Activated CD8-positive, alpha-beta memory T cell treated with anti-CD3 and anti-CD28 coated beads, Interleukin-2, amount 10 ng/mL, durations not matched to agents 7 days and 5 days (primary cell): ENCODE measurements at regions of chr22 and their contacts with region 1.

Region 1: DNA sequence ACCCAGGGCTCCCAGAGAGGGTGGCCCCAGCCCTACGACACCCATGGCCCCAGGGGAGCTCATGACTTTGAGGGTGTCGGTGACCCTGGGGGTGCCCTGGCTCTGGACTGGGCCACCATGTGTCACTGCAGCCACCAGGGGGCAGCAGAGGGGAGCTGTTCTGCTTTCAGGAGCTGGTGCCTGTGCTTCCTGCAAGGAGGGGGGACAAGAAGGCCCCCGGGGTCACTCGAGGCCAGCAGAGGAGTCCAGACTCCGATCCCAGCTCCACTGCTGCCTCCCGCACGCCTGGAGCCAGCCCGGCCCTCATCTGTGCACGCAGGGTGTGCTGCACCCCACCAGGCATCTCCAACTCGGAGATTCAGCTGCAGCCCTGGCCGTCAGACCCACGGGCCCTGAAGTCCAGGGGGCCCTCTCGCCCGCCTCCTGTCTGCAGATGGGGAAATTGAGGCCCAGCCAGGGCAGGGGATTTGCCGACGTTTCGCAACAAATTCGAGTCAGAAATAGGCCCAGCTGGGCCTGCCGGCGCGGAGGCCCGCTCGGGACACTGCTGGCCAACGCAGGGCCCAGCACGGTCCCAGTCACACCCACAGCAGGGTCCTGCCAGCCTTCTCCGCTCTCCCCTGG is 29.5 kb upstream of the WNT7B start:
- DNase-seq: peak; percentile 91
- ATAC-seq: peak; percentile 87
- H3K4me3 Mint-ChIP-seq: no peak overlapping the region
- H3K27ac Mint-ChIP-seq: no peak overlapping the region
- H3K4me1 Mint-ChIP-seq: peaks cover 17% of the 10 kb centered on the region
- H3K27me3 Mint-ChIP-seq: no peaks in the 10 kb centered on the region

Region 2: DNA sequence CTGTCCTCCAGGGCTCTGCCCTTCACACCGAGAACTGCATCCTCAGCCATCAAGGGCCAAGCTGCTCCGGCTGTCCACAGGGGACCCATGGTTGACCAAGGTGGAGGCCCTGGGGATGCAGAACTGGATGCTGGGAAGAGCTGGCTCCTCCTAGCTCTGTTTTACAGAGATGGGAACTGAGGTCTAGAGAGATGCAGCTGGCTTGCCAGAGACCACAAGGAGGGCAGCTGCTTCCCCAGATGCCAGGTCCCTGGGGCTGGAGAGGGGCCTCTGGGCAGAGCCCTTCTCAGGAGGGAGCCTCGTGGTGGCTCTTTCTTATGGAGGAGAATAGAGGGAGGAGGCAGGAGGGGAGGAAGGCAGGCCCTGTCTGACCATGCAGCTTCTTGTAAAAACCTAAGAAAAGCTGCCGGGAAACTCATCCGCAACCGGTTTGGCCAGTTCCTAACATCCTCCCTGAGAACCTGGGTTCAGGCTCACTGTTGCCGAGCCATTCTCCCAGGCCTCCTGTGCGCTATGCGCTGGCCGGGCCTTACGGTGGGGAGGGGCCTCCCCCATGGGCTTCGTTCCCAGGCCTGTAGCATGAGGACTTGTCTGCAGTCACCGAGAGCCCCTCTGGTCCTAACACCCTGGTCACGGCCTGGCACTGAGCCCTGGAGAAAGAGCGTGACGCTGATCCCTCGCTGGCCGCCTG is 110.1 kb before region 1 on chr22:
- CTCF ChIA-PET with region 1: no interaction called
- DNase-seq: no peak
- ATAC-seq: no peak
- H3K4me3 Mint-ChIP-seq: no peak overlapping the region
- H3K27ac Mint-ChIP-seq: no peak overlapping the region
- H3K4me1 Mint-ChIP-seq: no peaks in the 10 kb centered on the region
- H3K27me3 Mint-ChIP-seq: peaks cover 9% of the 10 kb centered on the region

Region 3: DNA sequence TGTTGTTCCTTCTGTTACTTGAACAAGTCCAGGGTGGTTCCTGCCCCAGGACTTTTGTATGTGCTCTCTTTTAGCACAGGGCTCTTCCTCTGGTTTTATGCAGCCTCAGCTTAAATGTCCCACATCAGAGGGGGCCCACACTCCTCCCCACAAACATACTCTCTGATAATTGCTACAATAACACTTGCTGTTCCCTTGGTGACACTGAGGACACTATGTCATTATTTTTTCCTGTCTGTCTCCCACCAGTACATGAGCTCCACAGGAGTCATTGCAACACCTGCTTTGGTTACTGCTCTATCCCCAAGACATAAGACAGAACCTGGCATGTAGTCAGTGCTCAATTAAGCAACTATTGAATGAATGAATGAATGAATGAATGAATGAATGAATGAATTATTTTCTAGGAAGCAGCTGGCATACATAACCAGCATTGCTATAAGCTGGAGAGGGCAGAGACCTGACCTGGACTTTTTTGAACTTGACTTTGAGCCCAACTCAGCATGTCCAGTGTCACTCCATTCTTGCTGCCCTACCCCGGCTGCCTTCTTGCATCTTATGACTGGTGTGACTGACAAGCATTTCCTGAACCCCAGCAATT is 22.1 kb before region 1 on chr22:
- CTCF ChIA-PET with region 1: interaction called, 10 read pairs
- DNase-seq: no peak
- ATAC-seq: no peak
- H3K4me3 Mint-ChIP-seq: no peak overlapping the region
- H3K27ac Mint-ChIP-seq: no peak overlapping the region
- H3K4me1 Mint-ChIP-seq: no peaks in the 10 kb centered on the region
- H3K27me3 Mint-ChIP-seq: peaks cover 3% of the 10 kb centered on the region

Region 4: GRCh38 chr22:46023558-46023981 is 17.1 kb after region 1 on chr22:
- CTCF ChIA-PET with region 1: interaction called, 52 read pairs
- DNase-seq: no peak
- ATAC-seq: no peak
- H3K4me3 Mint-ChIP-seq: no peak overlapping the region
- H3K27ac Mint-ChIP-seq: no peak overlapping the region
- H3K4me1 Mint-ChIP-seq: peaks cover 2% of the 10 kb centered on the region
- H3K27me3 Mint-ChIP-seq: peaks cover 26% of the 10 kb centered on the region

Region 5: GRCh38 chr22:46054091-46055073 is 47.9 kb after region 1 on chr22:
- CTCF ChIA-PET with region 1: interaction called, 12 read pairs
- DNase-seq: peak; percentile 50
- ATAC-seq: peak; percentile 46
- H3K4me3 Mint-ChIP-seq: peak overlapping the region; percentile 83
- H3K27ac Mint-ChIP-seq: peak overlapping the region; percentile 90
- H3K4me1 Mint-ChIP-seq: peaks cover 41% of the 10 kb centered on the region
- H3K27me3 Mint-ChIP-seq: no peaks in the 10 kb centered on the region

Region 6: DNA sequence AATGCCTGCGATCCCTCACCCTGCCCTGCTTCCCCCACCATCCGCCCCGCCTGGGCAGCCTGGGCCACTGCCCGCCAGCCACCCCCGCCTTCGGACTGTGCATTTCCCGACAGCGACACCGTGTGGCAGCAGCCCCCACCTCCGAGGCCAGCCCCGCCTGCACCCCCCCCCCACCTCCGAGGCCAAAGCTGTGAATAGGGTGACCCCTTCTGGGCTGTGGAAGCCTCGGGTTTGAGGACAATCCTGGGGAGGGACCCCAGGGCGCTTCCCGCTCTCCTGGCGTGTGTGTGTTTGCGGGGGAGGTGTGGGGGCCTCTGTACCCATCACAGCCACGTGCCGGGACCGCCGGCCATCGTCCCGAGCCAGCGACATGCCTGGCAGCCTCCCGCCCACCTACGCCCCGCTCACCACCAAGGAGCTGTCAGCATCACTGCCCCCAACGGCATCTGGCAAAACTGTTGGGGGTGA is 110.0 kb after region 1 on chr22:
- CTCF ChIA-PET with region 1: interaction called, 223 read pairs
- DNase-seq: peak; percentile 89
- ATAC-seq: peak; percentile 93
- H3K4me3 Mint-ChIP-seq: no peak overlapping the region
- H3K27ac Mint-ChIP-seq: no peak overlapping the region
- H3K4me1 Mint-ChIP-seq: peaks cover 3% of the 10 kb centered on the region
- H3K27me3 Mint-ChIP-seq: no peaks in the 10 kb centered on the region